HepG2 (cell line): ENCODE measurements at regions of chr2 and their contacts with region 1.

Region 1: DNA sequence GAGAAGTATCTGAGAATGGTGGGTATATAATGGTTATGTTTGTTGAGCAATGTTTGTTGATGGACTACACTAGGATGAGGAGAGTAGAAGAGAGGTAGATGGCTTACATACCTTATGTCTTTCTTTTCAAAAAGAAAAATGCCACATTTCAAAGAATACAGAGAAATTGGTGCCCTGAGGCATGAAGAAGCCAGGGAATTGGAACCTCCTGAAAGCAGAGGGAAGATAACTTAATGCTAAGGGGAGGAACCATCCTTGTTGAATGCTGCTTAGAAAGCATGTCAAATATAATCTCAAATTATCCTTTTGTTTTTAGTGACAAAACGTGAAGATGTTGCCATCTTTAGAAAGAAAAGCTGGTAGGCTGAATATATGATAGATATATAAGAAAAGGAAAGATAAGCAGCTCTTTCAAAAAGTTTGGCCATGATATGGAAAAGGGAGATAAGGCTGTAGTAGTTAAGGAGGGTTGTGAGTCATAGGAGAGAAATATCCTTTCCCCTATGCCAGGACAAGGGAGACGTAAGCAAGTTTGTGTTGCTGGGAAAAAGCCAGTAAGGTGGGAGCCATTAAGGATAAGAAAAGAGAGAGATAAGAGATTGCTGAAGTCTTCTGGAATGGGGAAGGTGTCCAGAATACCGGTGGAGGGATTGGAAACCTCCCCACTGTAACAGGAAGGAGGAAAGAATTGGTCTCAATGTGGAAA is 66.3 kb downstream of the SCN2A start:
- DNase-seq: no peak
- ATAC-seq: no peak
- H3K4me3 ChIP-seq: no peak overlapping the region
- H3K27ac ChIP-seq: no peak overlapping the region
- H3K4me1 ChIP-seq: no peaks in the 10 kb centered on the region
- H3K27me3 ChIP-seq: no peaks in the 10 kb centered on the region
- CTCF ChIP-seq: no peak
- EP300 ChIP-seq: no peak
- POLR2A ChIP-seq: no peak
- RAD21 ChIP-seq: no peak

Region 2: GRCh38 chr2:164992818-164993217 is 312.7 kb before region 1 on chr2:
- CTCF ChIA-PET with region 1: no interaction called
- POLR2A ChIA-PET with region 1: no interaction called
- in situ Hi-C with region 1: no loop called
- intact Hi-C with region 1: loop called (anchors 2 kb)
- DNase-seq: peak; percentile 80
- ATAC-seq: peak; percentile 84
- H3K4me3 ChIP-seq: no peak overlapping the region
- H3K27ac ChIP-seq: no peak overlapping the region
- H3K4me1 ChIP-seq: no peaks in the 10 kb centered on the region
- H3K27me3 ChIP-seq: no peaks in the 10 kb centered on the region
- CTCF ChIP-seq: peak; percentile 73
- EP300 ChIP-seq: no peak
- POLR2A ChIP-seq: no peak
- RAD21 ChIP-seq: 0 out of 2 replicates have a peak, but pooled peaks have one; percentile 20

Region 3: GRCh38 chr2:165015052-165015642 is 290.4 kb before region 1 on chr2:
- CTCF ChIA-PET with region 1: interaction called, 3 read pairs
- POLR2A ChIA-PET with region 1: no interaction called
- in situ Hi-C with region 1: no loop called
- intact Hi-C with region 1: loop called (anchors 5 kb)
- DNase-seq: peak; percentile 68
- ATAC-seq: peak; percentile 95
- H3K4me3 ChIP-seq: no peak overlapping the region
- H3K27ac ChIP-seq: no peak overlapping the region
- H3K4me1 ChIP-seq: 0 out of 2 replicates have a peak, but pooled peaks cover 8% of the 10 kb centered on the region
- H3K27me3 ChIP-seq: no peaks in the 10 kb centered on the region
- CTCF ChIP-seq: peak; percentile 95
- EP300 ChIP-seq: no peak
- POLR2A ChIP-seq: no peak
- RAD21 ChIP-seq: peak; percentile 77

Region 4: DNA sequence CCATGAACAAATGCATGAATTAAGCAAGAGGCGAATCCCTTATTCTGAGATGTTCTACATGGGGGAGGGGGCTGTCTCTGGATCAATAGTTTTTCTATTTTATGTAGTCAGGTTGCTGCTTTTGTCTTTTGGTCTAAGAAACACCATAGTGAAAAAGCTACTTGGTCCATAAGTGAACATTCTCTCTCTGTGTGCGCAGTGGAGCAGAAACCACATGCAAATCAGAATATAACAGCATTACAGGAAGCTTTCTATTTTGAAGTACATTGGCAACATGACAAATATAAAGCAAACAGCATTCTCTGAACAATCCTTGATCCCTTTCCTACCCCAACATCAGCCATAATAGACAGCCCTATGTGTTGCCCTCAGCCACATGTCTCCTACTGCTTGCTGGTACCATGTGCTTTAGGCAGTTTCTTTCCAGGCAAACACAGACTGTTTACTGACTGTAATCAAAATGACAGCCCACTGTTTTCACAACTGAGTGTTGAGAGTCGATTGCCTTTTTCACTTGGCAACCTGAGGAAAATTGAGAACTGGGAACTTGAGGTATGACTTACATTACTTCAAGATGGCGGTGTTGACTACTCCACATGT is 112.3 kb before region 1 on chr2:
- CTCF ChIA-PET with region 1: no interaction called
- POLR2A ChIA-PET with region 1: no interaction called
- in situ Hi-C with region 1: no loop called
- intact Hi-C with region 1: no loop called
- DNase-seq: no peak
- ATAC-seq: no peak
- H3K4me3 ChIP-seq: no peak overlapping the region
- H3K27ac ChIP-seq: no peak overlapping the region
- H3K4me1 ChIP-seq: no peaks in the 10 kb centered on the region
- H3K27me3 ChIP-seq: no peaks in the 10 kb centered on the region
- CTCF ChIP-seq: no peak
- EP300 ChIP-seq: no peak
- POLR2A ChIP-seq: no peak
- RAD21 ChIP-seq: no peak

Region 5: GRCh38 chr2:165239230-165239629 is 66.3 kb before region 1 on chr2 and contains the start of gene SCN2A:
- CTCF ChIA-PET with region 1: no interaction called
- POLR2A ChIA-PET with region 1: no interaction called
- in situ Hi-C with region 1: no loop called
- intact Hi-C with region 1: loop called (anchors 1 kb)
- DNase-seq: peak; percentile 54
- ATAC-seq: peak; percentile 62
- H3K4me3 ChIP-seq: no peak within 1 kb of the TSS
- H3K27ac ChIP-seq: no peak within 1 kb of the TSS
- H3K4me1 ChIP-seq: no peaks in the 10 kb centered on the region
- H3K27me3 ChIP-seq: no peaks in the 10 kb centered on the region
- CTCF ChIP-seq: peak; percentile 76
- EP300 ChIP-seq: no peak
- POLR2A ChIP-seq: no peak
- RAD21 ChIP-seq: peak; percentile 39; the same call in 1 of the 2 replicates
- total RNA-seq, gene SCN2A: 0.17 and 0.20 TPM in 2 replicates